CD4-positive, alpha-beta T cell (primary cell): ENCODE measurements at regions of chr3 and their contacts with region 1.

Region 1: DNA sequence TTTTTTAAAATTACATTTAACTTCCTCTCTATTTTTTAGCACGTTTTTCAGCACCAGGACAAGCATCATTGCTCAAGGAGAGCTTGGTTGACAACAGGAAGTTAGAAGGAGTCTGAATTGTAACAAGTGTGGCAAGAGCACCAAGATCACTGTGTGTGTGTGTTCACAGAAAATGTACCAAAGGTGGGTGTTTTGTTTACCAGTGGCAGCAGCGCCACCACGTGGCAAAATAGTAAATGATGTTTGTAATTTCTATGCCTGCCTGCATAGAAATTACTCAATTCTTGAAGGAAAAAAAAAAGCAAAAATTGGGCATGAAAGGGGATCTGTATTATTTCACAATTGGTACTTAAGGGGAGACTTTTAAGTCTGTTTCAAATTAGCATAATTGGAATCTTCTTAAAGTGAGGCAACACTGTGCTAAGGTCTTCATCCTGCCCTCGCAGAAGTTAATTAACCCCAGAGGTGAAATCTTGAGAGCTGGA is 7.4 kb upstream of the U2SURP start:
- DNase-seq: peak; percentile 28 to 80 (median 48)
- ATAC-seq: peak; percentile 82
- H3K4me3 ChIP-seq: no peak overlapping the region
- H3K4me3 Mint-ChIP-seq: peak overlapping the region; percentile 2
- H3K27ac ChIP-seq: no peak overlapping the region
- H3K27ac Mint-ChIP-seq: no peak overlapping the region
- H3K4me1 ChIP-seq: no peaks in the 10 kb centered on the region
- H3K4me1 Mint-ChIP-seq: peaks cover 5% of the 10 kb centered on the region
- H3K27me3 ChIP-seq: peaks cover 0 to 4% of the 10 kb centered on the region in 2 experiments
- H3K27me3 Mint-ChIP-seq: peaks cover 37% of the 10 kb centered on the region
- CTCF ChIP-seq: peak; percentile 73

Region 2: DNA sequence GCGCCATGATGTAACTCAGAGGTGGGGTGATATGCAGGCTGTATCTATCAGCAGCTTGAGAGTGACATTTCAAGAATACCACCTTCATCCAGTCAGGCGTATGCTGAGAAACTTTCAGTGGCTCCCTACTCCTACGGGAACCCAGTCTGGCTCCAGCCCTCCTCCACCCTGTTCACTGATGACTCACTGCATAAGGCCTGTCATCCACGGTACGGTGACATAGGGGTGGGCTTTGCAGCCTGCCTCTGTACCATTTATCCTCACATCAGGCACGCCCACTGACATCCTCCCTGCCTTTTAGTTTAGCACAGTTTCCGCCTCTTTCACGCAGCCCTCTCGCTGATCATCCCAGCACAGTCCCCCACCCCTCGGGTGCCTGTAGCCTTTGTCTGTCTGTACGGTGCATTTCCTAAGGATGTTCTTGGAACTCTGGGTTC is 1750.7 kb before region 1 on chr3:
- CTCF ChIA-PET with region 1: no interaction called
- POLR2A ChIA-PET with region 1: no interaction called
- intact Hi-C with region 1: loop called in 1 of 2 experiments (anchors 10 kb)
- DNase-seq: peak in 13 of 14 experiments; percentile 24 to 81 (median 63)
- ATAC-seq: peak; percentile 95
- H3K4me3 ChIP-seq: no peak overlapping the region
- H3K4me3 Mint-ChIP-seq: peak overlapping the region; percentile 74
- H3K27ac ChIP-seq: peak overlapping the region in 1 of 2 donors; percentile 51
- H3K27ac Mint-ChIP-seq: peak overlapping the region; percentile 91
- H3K4me1 ChIP-seq: peaks cover 34% of the 10 kb centered on the region
- H3K4me1 Mint-ChIP-seq: peaks cover 60% of the 10 kb centered on the region
- H3K27me3 ChIP-seq: no peaks in the 10 kb centered on the region
- H3K27me3 Mint-ChIP-seq: no peaks in the 10 kb centered on the region
- CTCF ChIP-seq: no peak

Region 3: DNA sequence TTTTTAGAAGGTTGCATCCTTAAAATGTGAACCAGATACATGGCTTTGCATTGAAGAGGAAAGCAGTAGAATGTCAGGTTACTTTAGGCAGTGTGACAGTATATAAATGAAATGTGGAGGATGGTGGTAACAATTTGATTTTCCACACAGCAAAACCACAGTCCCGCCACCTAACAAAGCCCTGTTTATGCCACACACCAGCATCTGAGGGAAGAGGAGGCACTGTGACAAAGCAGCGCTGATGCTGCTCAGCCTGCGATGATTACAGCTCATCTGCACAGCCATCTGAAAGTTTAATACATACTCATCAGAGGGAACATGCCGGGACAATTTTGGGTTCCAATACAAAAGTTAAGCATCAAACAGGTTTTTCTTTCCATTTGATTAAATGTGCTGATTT is 1247.0 kb before region 1 on chr3:
- CTCF ChIA-PET with region 1: no interaction called
- POLR2A ChIA-PET with region 1: no interaction called
- intact Hi-C with region 1: loop called in 1 of 2 experiments (anchors 10 kb)
- DNase-seq: no peak
- ATAC-seq: no peak
- H3K4me3 ChIP-seq: no peak overlapping the region
- H3K4me3 Mint-ChIP-seq: no peak overlapping the region
- H3K27ac ChIP-seq: no peak overlapping the region
- H3K27ac Mint-ChIP-seq: no peak overlapping the region
- H3K4me1 ChIP-seq: peaks cover 3% of the 10 kb centered on the region
- H3K4me1 Mint-ChIP-seq: peaks cover 24% of the 10 kb centered on the region
- H3K27me3 ChIP-seq: no peaks in the 10 kb centered on the region
- H3K27me3 Mint-ChIP-seq: no peaks in the 10 kb centered on the region
- CTCF ChIP-seq: no peak

Region 4: GRCh38 chr3:142129516-142130171 is 864.4 kb before region 1 on chr3:
- CTCF ChIA-PET with region 1: no interaction called
- POLR2A ChIA-PET with region 1: no interaction called
- intact Hi-C with region 1: loop called in 1 of 2 experiments (anchors 10 kb)
- DNase-seq: no peak
- ATAC-seq: no peak
- H3K4me3 ChIP-seq: no peak overlapping the region
- H3K4me3 Mint-ChIP-seq: no peak overlapping the region
- H3K27ac ChIP-seq: no peak overlapping the region
- H3K27ac Mint-ChIP-seq: no peak overlapping the region
- H3K4me1 ChIP-seq: no peaks in the 10 kb centered on the region
- H3K4me1 Mint-ChIP-seq: peaks cover 4% of the 10 kb centered on the region
- H3K27me3 ChIP-seq: no peaks in the 10 kb centered on the region
- H3K27me3 Mint-ChIP-seq: no peaks in the 10 kb centered on the region
- CTCF ChIP-seq: no peak

Region 5: DNA sequence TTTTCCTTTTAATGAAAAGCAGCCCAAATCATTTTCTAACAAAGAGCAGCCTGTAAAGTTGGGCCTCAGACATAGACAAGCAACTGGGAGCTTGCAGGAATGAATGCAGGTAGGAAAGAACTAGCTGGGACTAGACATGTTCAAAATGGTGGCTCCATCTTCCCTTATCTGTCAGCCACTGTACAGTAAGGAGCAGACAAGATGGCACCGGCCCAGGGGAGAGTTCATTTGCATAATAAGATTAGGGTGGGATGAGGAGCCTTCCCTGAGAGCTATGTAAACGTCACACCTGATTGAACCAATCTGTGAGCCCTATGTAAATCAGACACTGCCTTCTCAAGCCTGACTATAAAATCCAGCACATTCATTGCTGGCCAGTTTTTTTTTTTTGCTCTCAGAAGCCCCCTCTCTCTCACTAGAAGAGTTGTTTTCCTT is 708.9 kb before region 1 on chr3:
- CTCF ChIA-PET with region 1: no interaction called
- POLR2A ChIA-PET with region 1: no interaction called
- intact Hi-C with region 1: no loop called
- DNase-seq: no peak
- ATAC-seq: no peak
- H3K4me3 ChIP-seq: no peak overlapping the region
- H3K4me3 Mint-ChIP-seq: no peak overlapping the region
- H3K27ac ChIP-seq: no peak overlapping the region
- H3K27ac Mint-ChIP-seq: no peak overlapping the region
- H3K4me1 ChIP-seq: peaks cover 6% of the 10 kb centered on the region
- H3K4me1 Mint-ChIP-seq: no peaks in the 10 kb centered on the region
- H3K27me3 ChIP-seq: no peaks in the 10 kb centered on the region
- H3K27me3 Mint-ChIP-seq: no peaks in the 10 kb centered on the region
- CTCF ChIP-seq: no peak

Region 6: DNA sequence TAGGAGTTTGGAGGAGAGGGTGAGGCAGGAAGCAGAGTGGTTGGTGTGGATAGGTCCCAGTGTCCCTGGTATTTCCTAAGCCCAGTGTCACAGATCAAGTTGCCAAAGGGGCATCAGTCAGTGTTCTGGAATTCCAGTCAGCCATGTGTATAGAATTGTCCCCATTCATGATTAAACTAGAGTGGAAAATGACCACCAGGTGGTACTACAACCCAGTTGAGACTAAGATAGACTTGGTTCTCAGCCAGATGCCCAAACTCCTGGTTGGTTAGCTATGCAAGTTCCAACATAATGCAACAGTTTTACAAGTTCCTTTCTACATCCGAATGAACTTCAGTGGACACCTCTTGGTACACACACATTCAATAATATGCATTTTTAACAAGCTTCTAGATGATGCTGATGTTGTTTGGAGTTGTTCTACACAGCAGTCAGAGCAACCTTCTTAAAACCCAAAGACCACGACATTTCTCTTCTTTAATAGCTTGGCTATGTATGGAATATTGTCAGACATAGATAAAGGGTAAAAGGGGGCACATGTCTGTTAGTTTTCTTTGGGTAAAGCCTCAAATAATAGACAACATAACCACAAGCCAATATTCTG is 407.1 kb before region 1 on chr3:
- CTCF ChIA-PET with region 1: interaction called, 4 read pairs
- POLR2A ChIA-PET with region 1: no interaction called
- intact Hi-C with region 1: loop called (anchors 1 to 2 kb)
- DNase-seq: peak in 6 of 14 experiments; percentile 6 to 72 (median 48)
- ATAC-seq: peak; percentile 74
- H3K4me3 ChIP-seq: no peak overlapping the region
- H3K4me3 Mint-ChIP-seq: no peak overlapping the region
- H3K27ac ChIP-seq: no peak overlapping the region
- H3K27ac Mint-ChIP-seq: no peak overlapping the region
- H3K4me1 ChIP-seq: no peaks in the 10 kb centered on the region
- H3K4me1 Mint-ChIP-seq: no peaks in the 10 kb centered on the region
- H3K27me3 ChIP-seq: peaks cover 0 to 4% of the 10 kb centered on the region in 2 experiments
- H3K27me3 Mint-ChIP-seq: peaks cover 22% of the 10 kb centered on the region
- CTCF ChIP-seq: peak; percentile 66

Region 7: GRCh38 chr3:142828703-142829305 is 165.2 kb before region 1 on chr3:
- CTCF ChIA-PET with region 1: no interaction called
- POLR2A ChIA-PET with region 1: no interaction called
- intact Hi-C with region 1: loop called in 1 of 2 experiments (anchors 1 kb)
- DNase-seq: peak; percentile 14 to 67 (median 34)
- ATAC-seq: peak; percentile 82
- H3K4me3 ChIP-seq: no peak overlapping the region
- H3K4me3 Mint-ChIP-seq: no peak overlapping the region
- H3K27ac ChIP-seq: no peak overlapping the region
- H3K27ac Mint-ChIP-seq: no peak overlapping the region
- H3K4me1 ChIP-seq: no peaks in the 10 kb centered on the region
- H3K4me1 Mint-ChIP-seq: no peaks in the 10 kb centered on the region
- H3K27me3 ChIP-seq: no peaks in the 10 kb centered on the region
- H3K27me3 Mint-ChIP-seq: no peaks in the 10 kb centered on the region
- CTCF ChIP-seq: peak; percentile 49

Region 8: GRCh38 chr3:143226678-143227291 is 232.8 kb after region 1 on chr3:
- CTCF ChIA-PET with region 1: no interaction called
- POLR2A ChIA-PET with region 1: no interaction called
- intact Hi-C with region 1: no loop called
- DNase-seq: no peak
- ATAC-seq: no peak
- H3K4me3 ChIP-seq: no peak overlapping the region
- H3K4me3 Mint-ChIP-seq: no peak overlapping the region
- H3K27ac ChIP-seq: no peak overlapping the region
- H3K27ac Mint-ChIP-seq: no peak overlapping the region
- H3K4me1 ChIP-seq: no peaks in the 10 kb centered on the region
- H3K4me1 Mint-ChIP-seq: peaks cover 3% of the 10 kb centered on the region
- H3K27me3 ChIP-seq: no peaks in the 10 kb centered on the region
- H3K27me3 Mint-ChIP-seq: no peaks in the 10 kb centered on the region
- CTCF ChIP-seq: no peak